Activated B cell treated with CpG ODN at 0.5 μM for 24 hours (primary cell): ENCODE measurements at regions of chr4 and their contacts with region 1.

Region 1: DNA sequence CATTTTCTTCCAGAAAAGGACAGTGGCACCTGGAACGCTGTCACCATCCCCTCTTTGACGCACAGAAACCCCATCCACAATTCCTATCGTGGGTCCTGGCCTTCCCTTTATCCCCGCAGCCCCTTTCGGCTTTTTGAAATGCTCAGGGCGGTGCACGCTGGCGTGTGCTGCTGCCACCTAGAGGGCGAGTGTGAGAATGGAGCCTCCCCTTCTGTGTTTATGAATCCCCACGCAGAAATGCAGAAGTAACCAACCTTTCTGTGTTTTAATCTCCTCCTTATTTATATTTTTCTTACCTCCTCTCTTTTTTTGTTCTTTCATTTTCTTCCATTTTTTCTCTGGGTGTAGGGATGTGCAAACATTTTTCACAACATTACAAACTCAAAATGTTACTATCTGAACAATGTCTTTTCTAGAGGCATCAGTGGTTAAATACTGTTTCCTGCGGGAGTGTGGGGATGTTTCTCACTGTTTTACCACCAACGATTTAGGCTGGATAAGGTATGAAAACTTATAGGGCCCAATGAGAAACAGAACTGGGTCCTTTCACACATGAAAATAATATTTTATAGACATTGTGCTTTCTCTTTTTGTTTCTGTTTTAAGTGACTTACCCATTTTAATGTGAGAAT is 50.0 kb downstream of the TMA16 start:
- DNase-seq: peak; percentile 59
- ATAC-seq: peak; percentile 93
- H3K4me3 Mint-ChIP-seq: no peak overlapping the region
- H3K27ac Mint-ChIP-seq: no peak overlapping the region
- H3K4me1 Mint-ChIP-seq: peaks cover 30% of the 10 kb centered on the region
- H3K27me3 Mint-ChIP-seq: no peaks in the 10 kb centered on the region
- CTCF ChIP-seq: peak; percentile 58

Region 2: GRCh38 chr4:163107754-163108153 is 436.8 kb before region 1 on chr4:
- CTCF ChIA-PET with region 1: no interaction called
- POLR2A ChIA-PET with region 1: no interaction called
- intact Hi-C with region 1: loop called (anchors 1 kb)
- DNase-seq: no peak
- ATAC-seq: no peak
- H3K4me3 Mint-ChIP-seq: no peak overlapping the region
- H3K27ac Mint-ChIP-seq: no peak overlapping the region
- H3K4me1 Mint-ChIP-seq: peaks cover 17% of the 10 kb centered on the region
- H3K27me3 Mint-ChIP-seq: no peaks in the 10 kb centered on the region
- CTCF ChIP-seq: no peak

Region 3: GRCh38 chr4:163484906-163485305 is 59.6 kb before region 1 on chr4:
- CTCF ChIA-PET with region 1: interaction called, 107 read pairs
- POLR2A ChIA-PET with region 1: interaction called, 8 read pairs
- intact Hi-C with region 1: loop called (anchors 1 kb)
- DNase-seq: no peak
- ATAC-seq: peak; percentile 80
- H3K4me3 Mint-ChIP-seq: no peak overlapping the region
- H3K27ac Mint-ChIP-seq: no peak overlapping the region
- H3K4me1 Mint-ChIP-seq: no peaks in the 10 kb centered on the region
- H3K27me3 Mint-ChIP-seq: no peaks in the 10 kb centered on the region
- CTCF ChIP-seq: no peak

Region 4: DNA sequence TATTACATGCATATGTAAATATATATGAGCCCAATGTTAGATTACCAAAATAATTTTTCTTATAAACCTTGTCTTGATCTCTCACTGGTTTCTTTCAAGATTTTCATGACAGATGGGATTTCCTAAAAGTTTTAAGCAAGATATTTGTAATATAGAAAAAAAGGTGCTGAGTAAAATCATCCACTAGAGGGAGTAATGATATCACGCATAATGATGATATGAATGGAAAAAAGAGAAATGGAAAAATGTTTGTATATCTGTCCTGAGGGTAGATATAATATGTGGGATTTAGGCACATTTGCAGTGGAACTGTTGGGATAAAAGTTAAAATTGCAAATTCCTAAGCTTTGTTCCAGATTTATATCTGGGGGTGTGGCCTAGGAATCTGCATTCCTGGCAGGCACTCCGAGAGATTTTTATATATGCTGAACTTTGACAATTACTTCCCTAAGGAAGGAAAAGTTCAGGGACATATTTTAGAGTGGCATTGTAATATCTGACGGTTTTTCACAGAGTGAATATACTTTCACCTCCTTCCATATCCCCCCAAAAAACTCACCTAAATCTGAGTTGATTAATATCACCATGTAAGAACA is 10.4 kb after region 1 on chr4:
- CTCF ChIA-PET with region 1: interaction called, 37 read pairs
- POLR2A ChIA-PET with region 1: interaction called, 4 read pairs
- intact Hi-C with region 1: no loop called
- DNase-seq: no peak
- ATAC-seq: no peak
- H3K4me3 Mint-ChIP-seq: no peak overlapping the region
- H3K27ac Mint-ChIP-seq: peak overlapping the region; percentile 84
- H3K4me1 Mint-ChIP-seq: peaks cover 85% of the 10 kb centered on the region
- H3K27me3 Mint-ChIP-seq: no peaks in the 10 kb centered on the region
- CTCF ChIP-seq: peak; percentile 61

Region 5: GRCh38 chr4:163631288-163631687 is 86.8 kb after region 1 on chr4:
- CTCF ChIA-PET with region 1: no interaction called
- POLR2A ChIA-PET with region 1: no interaction called
- intact Hi-C with region 1: no loop called
- DNase-seq: no peak
- ATAC-seq: no peak
- H3K4me3 Mint-ChIP-seq: no peak overlapping the region
- H3K27ac Mint-ChIP-seq: no peak overlapping the region
- H3K4me1 Mint-ChIP-seq: no peaks in the 10 kb centered on the region
- H3K27me3 Mint-ChIP-seq: no peaks in the 10 kb centered on the region
- CTCF ChIP-seq: no peak

Region 6: GRCh38 chr4:163755013-163755412 is 210.5 kb after region 1 on chr4:
- CTCF ChIA-PET with region 1: interaction called, 167 read pairs
- POLR2A ChIA-PET with region 1: no interaction called
- intact Hi-C with region 1: no loop called
- DNase-seq: no peak
- ATAC-seq: peak; percentile 56
- H3K4me3 Mint-ChIP-seq: peak overlapping the region; percentile 8
- H3K27ac Mint-ChIP-seq: no peak overlapping the region
- H3K4me1 Mint-ChIP-seq: peaks cover 3% of the 10 kb centered on the region
- H3K27me3 Mint-ChIP-seq: peaks cover 4% of the 10 kb centered on the region
- CTCF ChIP-seq: no peak

Region 7: GRCh38 chr4:165190591-165191347 is 1646.2 kb after region 1 on chr4:
- CTCF ChIA-PET with region 1: no interaction called
- POLR2A ChIA-PET with region 1: no interaction called
- intact Hi-C with region 1: no loop called
- DNase-seq: no peak
- ATAC-seq: no peak
- H3K4me3 Mint-ChIP-seq: no peak overlapping the region
- H3K27ac Mint-ChIP-seq: no peak overlapping the region
- H3K4me1 Mint-ChIP-seq: no peaks in the 10 kb centered on the region
- H3K27me3 Mint-ChIP-seq: no peaks in the 10 kb centered on the region
- CTCF ChIP-seq: no peak